IMR-90 (cell line): ENCODE measurements at regions of chr15 and their contacts with region 1.

Region 1: DNA sequence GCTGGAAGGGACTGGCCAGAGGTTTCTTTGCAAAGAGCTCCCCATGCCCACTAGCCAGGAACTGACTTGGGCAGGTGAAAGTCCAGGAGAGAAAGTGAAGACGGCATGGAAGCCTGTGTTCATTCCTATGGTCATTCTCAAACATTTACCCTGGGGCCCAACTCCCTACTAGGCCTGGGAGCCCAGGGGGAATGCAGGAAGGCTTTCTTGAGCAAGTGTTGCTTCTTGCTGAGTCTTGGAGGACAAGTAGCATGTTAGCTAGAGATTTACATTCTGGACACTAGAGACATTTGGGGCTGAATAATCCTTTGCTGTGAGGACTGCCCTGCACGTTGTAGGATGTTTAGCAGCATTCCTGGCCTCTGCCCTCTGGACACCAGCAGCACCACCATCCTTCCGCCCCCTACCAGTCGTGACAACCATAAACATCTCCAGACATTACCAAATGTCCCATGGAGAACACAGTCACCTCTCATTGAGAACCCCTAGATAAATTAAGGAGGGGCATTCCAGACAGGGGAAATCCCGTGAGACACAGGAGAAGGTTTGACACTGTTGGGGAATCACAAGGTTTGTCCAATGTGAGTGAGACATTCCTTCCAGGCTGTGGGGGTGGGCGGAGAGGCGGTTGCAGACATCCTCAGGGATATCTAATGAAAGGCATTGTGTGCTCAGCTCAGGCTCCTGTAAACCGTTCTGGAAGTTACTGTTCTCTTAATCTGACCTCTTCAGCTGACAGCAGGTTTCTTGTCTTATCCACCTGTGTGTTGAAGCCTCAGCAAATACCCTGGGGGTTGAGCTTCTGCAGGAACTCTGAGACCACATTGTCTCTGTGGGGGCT is 236.2 kb downstream of the TLE3 start:
- DNase-seq: peak; percentile 62
- ATAC-seq: peak; percentile 30
- H3K4me3 ChIP-seq: no peak overlapping the region
- H3K27ac ChIP-seq: no peak overlapping the region
- H3K4me1 ChIP-seq: peaks cover 18% of the 10 kb centered on the region
- H3K27me3 ChIP-seq: no peaks in the 10 kb centered on the region
- CTCF ChIP-seq: no peak
- POLR2A ChIP-seq: no peak
- RAD21 ChIP-seq: 0 out of 2 replicates have a peak, but pooled peaks have one; percentile 9

Region 2: GRCh38 chr15:69760890-69761568 is 100.5 kb before region 1 on chr15:
- CTCF ChIA-PET with region 1: no interaction called
- POLR2A ChIA-PET with region 1: no interaction called
- dilution Hi-C with region 1: no loop called
- in situ Hi-C with region 1: no loop called
- intact Hi-C with region 1: loop called (anchors 2 kb)
- DNase-seq: peak; percentile 99
- ATAC-seq: peak; percentile 90
- H3K4me3 ChIP-seq: no peak overlapping the region
- H3K27ac ChIP-seq: no peak overlapping the region
- H3K4me1 ChIP-seq: peaks cover 12% of the 10 kb centered on the region
- H3K27me3 ChIP-seq: peaks cover 1% of the 10 kb centered on the region
- CTCF ChIP-seq: no peak
- POLR2A ChIP-seq: no peak
- RAD21 ChIP-seq: no peak

Region 3: GRCh38 chr15:69903470-69904469 is 42.2 kb after region 1 on chr15:
- CTCF ChIA-PET with region 1: no interaction called
- POLR2A ChIA-PET with region 1: no interaction called
- dilution Hi-C with region 1: no loop called
- in situ Hi-C with region 1: no loop called
- intact Hi-C with region 1: loop called (anchors 5 kb)
- DNase-seq: peak; percentile 57
- ATAC-seq: peak; percentile 94
- H3K4me3 ChIP-seq: no peak overlapping the region
- H3K27ac ChIP-seq: no peak overlapping the region
- H3K4me1 ChIP-seq: peaks cover 11% of the 10 kb centered on the region
- H3K27me3 ChIP-seq: peaks cover 15% of the 10 kb centered on the region
- CTCF ChIP-seq: no peak
- POLR2A ChIP-seq: no peak
- RAD21 ChIP-seq: no peak

Region 4: DNA sequence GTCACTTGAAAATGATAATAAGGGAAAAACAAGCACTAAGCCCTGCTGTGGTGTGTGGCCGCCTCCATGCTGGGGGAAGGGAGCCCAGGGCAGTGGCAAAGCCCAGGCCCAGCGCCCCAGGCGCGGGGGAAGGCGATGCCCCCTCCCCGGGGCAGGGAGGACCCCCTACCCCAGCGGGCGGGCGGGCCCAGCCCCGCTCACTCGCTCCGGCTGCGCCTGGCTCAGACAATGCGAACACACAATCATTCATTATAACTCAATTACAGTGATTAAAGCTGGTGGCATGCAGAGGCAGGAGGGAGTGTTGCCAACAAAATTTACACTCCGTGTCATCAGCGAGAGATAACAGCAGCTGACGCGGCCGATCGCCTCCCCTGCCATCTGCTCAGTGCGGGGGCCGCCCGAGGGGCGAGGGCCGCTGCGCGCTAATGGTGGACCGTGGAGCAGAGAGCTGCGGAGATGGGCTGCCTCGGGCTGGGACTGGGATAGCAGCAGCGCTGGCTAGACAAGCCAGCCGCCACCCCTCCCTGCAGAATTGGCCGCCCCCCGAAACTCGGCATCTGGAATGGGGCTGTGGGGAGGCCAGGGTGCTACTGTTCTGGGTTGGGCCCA is 172.1 kb after region 1 on chr15:
- CTCF ChIA-PET with region 1: no interaction called
- POLR2A ChIA-PET with region 1: no interaction called
- dilution Hi-C with region 1: no loop called
- in situ Hi-C with region 1: no loop called
- intact Hi-C with region 1: no loop called
- DNase-seq: peak; percentile 62
- ATAC-seq: peak; percentile 75
- H3K4me3 ChIP-seq: no peak overlapping the region
- H3K27ac ChIP-seq: no peak overlapping the region
- H3K4me1 ChIP-seq: peaks cover 6% of the 10 kb centered on the region; the same call in 1 of the 2 replicates
- H3K27me3 ChIP-seq: peaks cover 68% of the 10 kb centered on the region
- CTCF ChIP-seq: no peak
- POLR2A ChIP-seq: no peak
- RAD21 ChIP-seq: no peak